CD4-positive, alpha-beta T cell (primary cell): ENCODE measurements at regions of chr11 and their contacts with region 1.

Region 1: GRCh38 chr11:95150946-95151684 is 61.5 kb downstream of the ENDOD1 start:
- DNase-seq: peak; percentile 83 to 96 (median 88)
- ATAC-seq: peak; percentile 92
- H3K4me3 ChIP-seq: peak overlapping the region; percentile 74
- H3K4me3 Mint-ChIP-seq: peak overlapping the region; percentile 92
- H3K27ac ChIP-seq: peak overlapping the region; percentile 69 to 72
- H3K27ac Mint-ChIP-seq: peak overlapping the region; percentile 97
- H3K4me1 ChIP-seq: peaks cover 49% of the 10 kb centered on the region
- H3K4me1 Mint-ChIP-seq: peaks cover 37% of the 10 kb centered on the region
- H3K27me3 ChIP-seq: no peaks in the 10 kb centered on the region
- H3K27me3 Mint-ChIP-seq: peaks cover 4% of the 10 kb centered on the region
- CTCF ChIP-seq: peak; percentile 97

Region 2: GRCh38 chr11:94623120-94623735 is 527.9 kb before region 1 on chr11:
- CTCF ChIA-PET with region 1: no interaction called
- POLR2A ChIA-PET with region 1: no interaction called
- intact Hi-C with region 1: loop called (anchors 1 to 10 kb)
- DNase-seq: peak in 13 of 14 experiments; percentile 5 to 71 (median 19)
- ATAC-seq: peak; percentile 91
- H3K4me3 ChIP-seq: no peak overlapping the region
- H3K4me3 Mint-ChIP-seq: no peak overlapping the region
- H3K27ac ChIP-seq: no peak overlapping the region
- H3K27ac Mint-ChIP-seq: no peak overlapping the region
- H3K4me1 ChIP-seq: no peaks in the 10 kb centered on the region
- H3K4me1 Mint-ChIP-seq: no peaks in the 10 kb centered on the region
- H3K27me3 ChIP-seq: no peaks in the 10 kb centered on the region
- H3K27me3 Mint-ChIP-seq: peaks cover 11% of the 10 kb centered on the region
- CTCF ChIP-seq: peak; percentile 48

Region 3: GRCh38 chr11:95067039-95067840 is 83.9 kb before region 1 on chr11:
- CTCF ChIA-PET with region 1: interaction called, 38 read pairs
- POLR2A ChIA-PET with region 1: interaction called, 91 read pairs
- intact Hi-C with region 1: loop called in 1 of 2 experiments (anchors 1 kb)
- DNase-seq: peak; percentile 53 to 88 (median 69)
- ATAC-seq: peak; percentile 63
- H3K4me3 ChIP-seq: peak overlapping the region; percentile 95
- H3K4me3 Mint-ChIP-seq: peak overlapping the region; percentile 98
- H3K27ac ChIP-seq: peak overlapping the region; percentile 87 to 90
- H3K27ac Mint-ChIP-seq: peak overlapping the region; percentile 99
- H3K4me1 ChIP-seq: peaks cover 12% of the 10 kb centered on the region
- H3K4me1 Mint-ChIP-seq: peaks cover 38% of the 10 kb centered on the region
- H3K27me3 ChIP-seq: no peaks in the 10 kb centered on the region
- H3K27me3 Mint-ChIP-seq: no peaks in the 10 kb centered on the region
- CTCF ChIP-seq: peak; percentile 60

Region 4: DNA sequence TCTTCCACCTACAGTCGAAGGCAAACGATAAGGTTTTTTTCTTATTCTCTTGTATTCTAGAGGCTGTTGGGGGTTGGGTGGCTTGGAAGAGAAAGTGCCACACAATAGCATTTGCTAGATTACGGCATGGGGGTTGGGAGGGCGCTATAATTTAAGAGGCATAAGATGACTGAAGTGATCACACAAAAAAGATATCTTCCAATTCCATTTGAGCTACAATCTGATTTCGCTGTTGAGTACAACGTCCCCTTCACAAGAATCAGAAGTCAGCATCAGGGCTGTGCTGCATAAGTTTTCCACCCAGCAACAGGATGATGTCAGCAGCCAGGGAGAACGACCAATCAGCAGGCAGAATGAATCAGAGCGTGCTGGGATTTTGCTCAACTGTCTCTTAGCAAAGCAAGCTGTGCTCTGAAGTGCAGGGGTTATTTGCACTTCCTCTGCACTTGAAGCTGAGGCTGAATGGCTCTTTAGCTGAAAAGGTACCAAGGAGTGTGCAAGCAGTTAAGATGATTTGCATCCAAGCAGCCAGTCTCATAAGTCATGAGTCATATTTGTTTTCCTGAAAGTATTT is 103.1 kb after region 1 on chr11:
- CTCF ChIA-PET with region 1: no interaction called
- POLR2A ChIA-PET with region 1: interaction called, 4 read pairs
- intact Hi-C with region 1: loop called in 1 of 2 experiments (anchors 5 kb)
- DNase-seq: peak; percentile 64 to 93 (median 74)
- ATAC-seq: peak; percentile 98
- H3K4me3 ChIP-seq: peak overlapping the region; percentile 53
- H3K4me3 Mint-ChIP-seq: peak overlapping the region; percentile 92
- H3K27ac ChIP-seq: peak overlapping the region; percentile 53 to 58
- H3K27ac Mint-ChIP-seq: peak overlapping the region; percentile 92
- H3K4me1 ChIP-seq: peaks cover 31% of the 10 kb centered on the region
- H3K4me1 Mint-ChIP-seq: peaks cover 55% of the 10 kb centered on the region
- H3K27me3 ChIP-seq: no peaks in the 10 kb centered on the region
- H3K27me3 Mint-ChIP-seq: no peaks in the 10 kb centered on the region
- CTCF ChIP-seq: no peak

Region 5: GRCh38 chr11:95705485-95706124 is 554.5 kb after region 1 on chr11:
- CTCF ChIA-PET with region 1: interaction called, 65 read pairs
- POLR2A ChIA-PET with region 1: interaction called, 53 read pairs
- intact Hi-C with region 1: loop called (anchors 1 kb)
- DNase-seq: peak; percentile 76 to 93 (median 85)
- ATAC-seq: peak; percentile 92
- H3K4me3 ChIP-seq: no peak overlapping the region
- H3K4me3 Mint-ChIP-seq: no peak overlapping the region
- H3K27ac ChIP-seq: peak overlapping the region; percentile 33 to 54
- H3K27ac Mint-ChIP-seq: no peak overlapping the region
- H3K4me1 ChIP-seq: peaks cover 33% of the 10 kb centered on the region
- H3K4me1 Mint-ChIP-seq: peaks cover 11% of the 10 kb centered on the region
- H3K27me3 ChIP-seq: no peaks in the 10 kb centered on the region
- H3K27me3 Mint-ChIP-seq: no peaks in the 10 kb centered on the region
- CTCF ChIP-seq: peak; percentile 94

Region 6: GRCh38 chr11:96389720-96390487 is 1238.8 kb after region 1 on chr11 and contains the starts of genes CCDC82 and JRKL:
- CTCF ChIA-PET with region 1: no interaction called
- POLR2A ChIA-PET with region 1: no interaction called
- intact Hi-C with region 1: loop called in 1 of 2 experiments (anchors 10 kb)
- DNase-seq: peak; percentile 96 to 99 (median 98)
- ATAC-seq: peak; percentile 96
- H3K4me3 ChIP-seq: peak within 1 kb of the TSS; percentile 86
- H3K4me3 Mint-ChIP-seq: peak within 1 kb of the TSS; percentile 91
- H3K27ac ChIP-seq: peak within 1 kb of the TSS; percentile 84
- H3K27ac Mint-ChIP-seq: peak within 1 kb of the TSS; percentile 88
- H3K4me1 ChIP-seq: peaks cover 18% of the 10 kb centered on the region
- H3K4me1 Mint-ChIP-seq: peaks cover 51% of the 10 kb centered on the region
- H3K27me3 ChIP-seq: no peaks in the 10 kb centered on the region
- H3K27me3 Mint-ChIP-seq: no peaks in the 10 kb centered on the region
- CTCF ChIP-seq: no peak
- total RNA-seq, gene CCDC82: 23.7 to 24.4 TPM
- total RNA-seq, gene JRKL: 3.0 to 3.5 TPM